ENCODE measurements at regions of chr1 and their contacts with region 1.

Region 1: DNA sequence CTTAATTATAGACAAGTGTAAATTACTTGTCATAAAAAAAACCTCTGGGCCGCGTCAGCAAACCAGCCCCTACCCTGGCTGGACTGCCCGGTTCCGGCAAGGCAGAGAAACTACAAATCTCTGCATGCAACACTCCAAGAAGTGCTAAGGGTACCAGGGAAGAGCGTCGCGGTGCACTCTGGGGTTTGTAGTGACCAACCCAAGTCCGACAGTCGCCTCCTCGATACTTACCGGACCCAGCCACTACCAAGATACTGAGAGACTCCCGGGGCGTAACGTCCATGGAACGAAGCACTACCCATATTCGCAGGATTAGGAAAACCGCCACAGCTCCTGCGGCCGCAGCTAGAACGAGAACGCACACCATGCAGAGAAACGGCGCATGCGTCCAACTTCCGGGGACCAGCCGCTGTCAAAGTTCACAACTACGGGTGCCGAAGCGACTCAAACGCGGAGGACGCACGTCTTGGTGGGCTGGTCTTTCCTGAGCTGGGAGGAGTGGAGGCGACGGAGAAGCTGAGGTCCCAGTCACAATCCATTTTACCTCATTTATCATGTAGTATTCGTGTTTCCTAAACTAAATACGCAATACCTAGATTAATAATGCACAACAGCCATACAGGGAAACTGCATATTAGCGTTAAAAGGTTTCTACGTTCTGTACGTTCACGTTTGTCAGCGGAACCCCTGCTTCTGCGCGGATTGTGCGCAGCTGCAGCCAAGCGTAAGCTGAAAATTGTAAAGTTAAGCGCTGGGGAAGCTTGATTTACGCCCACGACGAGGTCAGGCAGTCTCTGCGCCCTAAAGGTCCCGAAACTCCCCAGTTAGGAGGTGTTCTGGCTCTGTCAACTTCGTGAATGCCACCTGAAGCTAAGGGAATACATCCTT is at the start of gene ALG14:
- DNase-seq: peak; percentile 96
- H3K4me3 Mint-ChIP-seq: peak within 1 kb of the TSS; percentile 91
- H3K27ac Mint-ChIP-seq: peak within 1 kb of the TSS; percentile 95
- H3K4me1 Mint-ChIP-seq: peaks cover 12% of the 10 kb centered on the region
- H3K27me3 Mint-ChIP-seq: peaks cover 2% of the 10 kb centered on the region
- total RNA-seq, gene ALG14: 4.1 to 6.2 TPM

Region 2: GRCh38 chr1:94383966-94384408 is 688.8 kb before region 1 on chr1:
- CTCF ChIA-PET with region 1: no interaction called
- intact Hi-C with region 1: loop called (anchors 5 kb)
- DNase-seq: peak; percentile 48
- H3K4me3 Mint-ChIP-seq: peak overlapping the region; percentile 5
- H3K27ac Mint-ChIP-seq: peak overlapping the region; percentile 85
- H3K4me1 Mint-ChIP-seq: peaks cover 32% of the 10 kb centered on the region
- H3K27me3 Mint-ChIP-seq: peaks cover 4% of the 10 kb centered on the region

Region 3: DNA sequence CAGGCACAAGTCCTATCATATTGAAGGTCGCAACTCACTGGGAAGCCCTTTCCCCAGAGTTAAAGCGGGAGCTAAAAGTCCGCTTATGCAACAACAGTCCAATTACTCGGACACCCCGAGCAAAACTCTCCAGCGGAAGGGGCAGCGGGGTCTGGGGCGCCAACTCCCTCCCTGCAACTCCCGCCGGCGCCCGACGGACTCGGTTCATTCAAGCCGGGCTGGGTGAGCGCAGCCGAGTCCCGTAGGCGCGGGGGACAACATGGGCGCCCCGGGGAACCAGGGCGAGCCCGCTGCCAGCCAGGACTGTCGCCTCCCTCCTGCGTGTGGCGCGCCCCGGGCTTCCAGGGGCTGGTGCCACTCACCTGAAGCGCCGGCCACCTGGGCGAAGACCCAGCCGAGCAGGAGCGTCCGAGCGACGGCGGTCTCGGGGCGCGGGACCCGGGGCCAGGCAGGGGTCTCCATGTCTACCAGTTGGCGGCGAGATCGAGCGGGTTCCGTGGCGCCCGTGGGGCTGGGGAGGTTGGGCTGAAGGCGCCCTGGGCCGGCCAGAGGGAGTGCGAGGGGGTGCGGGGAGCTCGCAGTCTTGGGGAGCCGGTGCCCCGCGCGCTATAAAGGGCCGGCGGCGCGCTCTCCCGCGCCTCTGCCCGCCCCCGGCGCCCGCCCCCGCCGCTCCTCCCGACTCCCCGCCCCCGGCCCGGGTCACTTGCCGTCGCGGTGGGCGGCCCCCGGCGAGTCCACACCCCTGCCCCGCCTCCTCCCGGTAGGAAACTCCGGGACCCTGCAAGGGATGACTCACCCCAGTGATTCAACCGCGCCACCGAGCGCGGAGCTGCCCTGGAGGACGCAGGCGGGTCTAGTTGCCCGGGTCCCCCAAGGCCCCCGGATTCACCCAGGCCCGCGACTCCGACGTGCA is 531.3 kb before region 1 on chr1 and contains the start of gene F3:
- CTCF ChIA-PET with region 1: no interaction called
- intact Hi-C with region 1: loop called (anchors 5 kb)
- DNase-seq: peak; percentile 89
- H3K4me3 Mint-ChIP-seq: peak within 1 kb of the TSS; percentile 72
- H3K27ac Mint-ChIP-seq: no peak within 1 kb of the TSS
- H3K4me1 Mint-ChIP-seq: peaks cover 14% of the 10 kb centered on the region
- H3K27me3 Mint-ChIP-seq: peaks cover 63% of the 10 kb centered on the region
- total RNA-seq, gene F3: 0.10 TPM in 1 of 2 experiments, not detected in the other

Region 4: DNA sequence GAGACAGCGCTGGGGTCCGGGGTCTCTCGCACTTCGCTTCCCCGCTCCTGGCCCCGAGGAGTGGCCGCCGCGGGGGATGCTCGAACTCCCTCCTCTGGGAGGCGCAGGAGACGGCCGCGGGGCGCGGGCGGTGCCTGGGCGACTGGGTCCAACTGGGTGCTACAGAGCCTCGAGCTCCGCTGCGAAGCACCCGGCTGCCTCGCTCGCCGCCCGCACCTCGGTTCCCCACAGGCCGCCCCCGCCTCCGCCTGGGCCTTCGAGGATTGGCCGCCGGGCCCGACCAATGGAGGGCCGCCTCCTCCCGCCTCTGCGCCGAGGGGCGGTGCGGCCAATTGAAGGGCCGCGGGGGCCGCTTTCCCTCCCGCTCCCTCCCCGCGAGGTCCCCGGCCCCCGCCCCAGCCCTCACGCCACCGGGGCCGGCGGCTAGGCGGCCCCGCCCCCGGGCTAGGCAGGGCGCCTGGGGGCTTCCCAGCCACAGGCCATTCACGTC is 145.8 kb before region 1 on chr1 and contains the start of gene CNN3:
- CTCF ChIA-PET with region 1: no interaction called
- intact Hi-C with region 1: loop called (anchors 1 kb)
- DNase-seq: peak; percentile 77
- H3K4me3 Mint-ChIP-seq: peak within 1 kb of the TSS; percentile 85
- H3K27ac Mint-ChIP-seq: no peak within 1 kb of the TSS
- H3K4me1 Mint-ChIP-seq: peaks cover 21% of the 10 kb centered on the region
- H3K27me3 Mint-ChIP-seq: peaks cover 15% of the 10 kb centered on the region
- total RNA-seq, gene CNN3: 10.0 to 10.6 TPM

Region 5: GRCh38 chr1:95084317-95085176 is 11.8 kb after region 1 on chr1:
- CTCF ChIA-PET with region 1: interaction called, 18 read pairs
- intact Hi-C with region 1: no loop called
- DNase-seq: peak; percentile 38
- H3K4me3 Mint-ChIP-seq: no peak overlapping the region
- H3K27ac Mint-ChIP-seq: no peak overlapping the region
- H3K4me1 Mint-ChIP-seq: no peaks in the 10 kb centered on the region
- H3K27me3 Mint-ChIP-seq: no peaks in the 10 kb centered on the region

Region 6: DNA sequence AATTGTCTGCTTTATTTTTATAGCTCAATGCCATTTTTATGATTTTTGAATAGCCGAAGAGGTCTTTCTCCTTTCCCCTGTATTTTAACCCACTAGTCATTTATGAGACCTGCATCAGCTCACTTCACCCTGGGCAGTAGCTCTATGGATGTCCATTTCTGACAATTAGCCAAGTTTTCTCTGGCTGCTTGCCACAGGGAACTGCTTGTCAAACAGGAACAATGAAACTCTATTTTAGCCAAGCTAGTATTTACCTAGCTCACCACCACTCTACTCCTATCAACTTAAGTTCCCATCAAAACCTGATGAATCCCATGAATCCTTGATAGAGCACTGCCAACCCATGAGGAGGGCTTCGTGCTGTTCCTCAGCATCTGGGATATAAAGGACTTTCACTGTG is 568.0 kb after region 1 on chr1:
- CTCF ChIA-PET with region 1: no interaction called
- intact Hi-C with region 1: no loop called
- DNase-seq: no peak
- H3K4me3 Mint-ChIP-seq: no peak overlapping the region
- H3K27ac Mint-ChIP-seq: no peak overlapping the region
- H3K4me1 Mint-ChIP-seq: no peaks in the 10 kb centered on the region
- H3K27me3 Mint-ChIP-seq: no peaks in the 10 kb centered on the region

Region 7: GRCh38 chr1:96721416-96722160 is 1648.8 kb after region 1 on chr1 and contains the start of gene PTBP2:
- CTCF ChIA-PET with region 1: no interaction called
- intact Hi-C with region 1: loop called (anchors 1 kb)
- DNase-seq: peak; percentile 83
- H3K4me3 Mint-ChIP-seq: peak within 1 kb of the TSS; percentile 93
- H3K27ac Mint-ChIP-seq: peak within 1 kb of the TSS; percentile 92
- H3K4me1 Mint-ChIP-seq: peaks cover 23% of the 10 kb centered on the region
- H3K27me3 Mint-ChIP-seq: no peaks in the 10 kb centered on the region
- total RNA-seq, gene PTBP2: 12.6 to 13.1 TPM